Naive thymus-derived CD4-positive, alpha-beta T cell (primary cell): ENCODE measurements at regions of chr6 and their contacts with region 1.

Region 1: GRCh38 chr6:31665501-31666336 is at the start of gene CSNK2B:
- DNase-seq: peak; percentile 87 to 99 (median 98)
- ATAC-seq: peak; percentile 94
- H3K4me3 ChIP-seq: peak within 1 kb of the TSS; percentile 91
- H3K4me3 Mint-ChIP-seq: peak within 1 kb of the TSS; percentile 93 to 99 (median 96)
- H3K27ac ChIP-seq: peak within 1 kb of the TSS; percentile 97
- H3K27ac Mint-ChIP-seq: peak within 1 kb of the TSS; percentile 94 to 99 (median 98)
- H3K4me1 ChIP-seq: peaks cover 33 to 43% of the 10 kb centered on the region in 2 donors
- H3K4me1 Mint-ChIP-seq: peaks cover 25 to 75% (median 64%) of the 10 kb centered on the region in 7 donors
- H3K27me3 ChIP-seq: no peaks in the 10 kb centered on the region
- H3K27me3 Mint-ChIP-seq: peaks cover 0 to 2% (median 0%) of the 10 kb centered on the region in 5 donors
- total RNA-seq, gene CSNK2B: 101 to 215 (median 133) TPM

Region 2: GRCh38 chr6:31541658-31542521 is 123.8 kb before region 1 on chr6 and contains the start of gene DDX39B:
- CTCF ChIA-PET with region 1: no interaction called
- POLR2A ChIA-PET with region 1: interaction called, 7 read pairs
- intact Hi-C with region 1: loop called (anchors 1 kb)
- DNase-seq: peak; percentile 80 to 97 (median 94)
- ATAC-seq: peak; percentile 83
- H3K4me3 ChIP-seq: peak within 1 kb of the TSS; percentile 77
- H3K4me3 Mint-ChIP-seq: peak within 1 kb of the TSS; percentile 84 to 99 (median 98)
- H3K27ac ChIP-seq: peak within 1 kb of the TSS; percentile 97
- H3K27ac Mint-ChIP-seq: peak within 1 kb of the TSS; percentile 90 to 100 (median 100)
- H3K4me1 ChIP-seq: peaks cover 34 to 45% of the 10 kb centered on the region in 2 donors
- H3K4me1 Mint-ChIP-seq: peaks cover 34 to 65% (median 55%) of the 10 kb centered on the region in 7 donors
- H3K27me3 ChIP-seq: no peaks in the 10 kb centered on the region
- H3K27me3 Mint-ChIP-seq: no peaks in the 10 kb centered on the region
- total RNA-seq, gene DDX39B: 443 to 761 (median 546) TPM

Region 3: GRCh38 chr6:31680840-31681671 is 15.3 kb after region 1 on chr6 and contains the start of gene LY6G5C:
- CTCF ChIA-PET with region 1: no interaction called
- POLR2A ChIA-PET with region 1: interaction called, 3 read pairs
- intact Hi-C with region 1: loop called in 1 of 2 experiments (anchors 1 kb)
- DNase-seq: peak in 8 of 9 donors; percentile 28 to 65 (median 48)
- ATAC-seq: peak; percentile 80
- H3K4me3 ChIP-seq: peak within 1 kb of the TSS; percentile 78
- H3K4me3 Mint-ChIP-seq: peak within 1 kb of the TSS; percentile 86 to 98 (median 90)
- H3K27ac ChIP-seq: peak within 1 kb of the TSS; percentile 68
- H3K27ac Mint-ChIP-seq: peak within 1 kb of the TSS; percentile 60 to 86 (median 68)
- H3K4me1 ChIP-seq: peaks cover 15 to 16% of the 10 kb centered on the region in 2 donors
- H3K4me1 Mint-ChIP-seq: peaks cover 14 to 32% (median 19%) of the 10 kb centered on the region in 7 donors
- H3K27me3 ChIP-seq: no peaks in the 10 kb centered on the region
- H3K27me3 Mint-ChIP-seq: no peaks in the 10 kb centered on the region
- total RNA-seq, gene LY6G5C: 2.4 to 4.3 (median 3.1) TPM

Region 4: GRCh38 chr6:31822036-31822821 is 156.5 kb after region 1 on chr6:
- CTCF ChIA-PET with region 1: no interaction called
- POLR2A ChIA-PET with region 1: interaction called, 7 read pairs
- intact Hi-C with region 1: loop called (anchors 1 kb)
- DNase-seq: peak in 8 of 9 donors; percentile 46 to 72 (median 58)
- ATAC-seq: peak; percentile 57
- H3K4me3 ChIP-seq: peak overlapping the region; percentile 92
- H3K4me3 Mint-ChIP-seq: peak overlapping the region; percentile 92 to 98 (median 94)
- H3K27ac ChIP-seq: peak overlapping the region; percentile 81
- H3K27ac Mint-ChIP-seq: peak overlapping the region; percentile 87 to 98 (median 94)
- H3K4me1 ChIP-seq: peaks cover 24 to 27% of the 10 kb centered on the region in 2 donors
- H3K4me1 Mint-ChIP-seq: peaks cover 9 to 72% (median 62%) of the 10 kb centered on the region in 7 donors
- H3K27me3 ChIP-seq: no peaks in the 10 kb centered on the region
- H3K27me3 Mint-ChIP-seq: no peaks in the 10 kb centered on the region

Region 5: GRCh38 chr6:31862344-31863227 is 196.9 kb after region 1 on chr6 and contains the start of gene NEU1:
- CTCF ChIA-PET with region 1: no interaction called
- POLR2A ChIA-PET with region 1: interaction called, 7 read pairs
- intact Hi-C with region 1: loop called (anchors 1 kb)
- DNase-seq: peak; percentile 87 to 100 (median 99)
- ATAC-seq: peak; percentile 97
- H3K4me3 ChIP-seq: peak within 1 kb of the TSS; percentile 97
- H3K4me3 Mint-ChIP-seq: peak within 1 kb of the TSS; percentile 87 to 96 (median 93)
- H3K27ac ChIP-seq: peak within 1 kb of the TSS; percentile 86
- H3K27ac Mint-ChIP-seq: peak within 1 kb of the TSS; percentile 85 to 97 (median 93)
- H3K4me1 ChIP-seq: peaks cover 8 to 15% of the 10 kb centered on the region in 2 donors
- H3K4me1 Mint-ChIP-seq: peaks cover 14 to 29% (median 20%) of the 10 kb centered on the region in 7 donors
- H3K27me3 ChIP-seq: no peaks in the 10 kb centered on the region
- H3K27me3 Mint-ChIP-seq: peaks cover 0 to 2% (median 0%) of the 10 kb centered on the region in 5 donors
- total RNA-seq, gene NEU1: 18.6 to 35.0 (median 20.1) TPM

Region 6: DNA sequence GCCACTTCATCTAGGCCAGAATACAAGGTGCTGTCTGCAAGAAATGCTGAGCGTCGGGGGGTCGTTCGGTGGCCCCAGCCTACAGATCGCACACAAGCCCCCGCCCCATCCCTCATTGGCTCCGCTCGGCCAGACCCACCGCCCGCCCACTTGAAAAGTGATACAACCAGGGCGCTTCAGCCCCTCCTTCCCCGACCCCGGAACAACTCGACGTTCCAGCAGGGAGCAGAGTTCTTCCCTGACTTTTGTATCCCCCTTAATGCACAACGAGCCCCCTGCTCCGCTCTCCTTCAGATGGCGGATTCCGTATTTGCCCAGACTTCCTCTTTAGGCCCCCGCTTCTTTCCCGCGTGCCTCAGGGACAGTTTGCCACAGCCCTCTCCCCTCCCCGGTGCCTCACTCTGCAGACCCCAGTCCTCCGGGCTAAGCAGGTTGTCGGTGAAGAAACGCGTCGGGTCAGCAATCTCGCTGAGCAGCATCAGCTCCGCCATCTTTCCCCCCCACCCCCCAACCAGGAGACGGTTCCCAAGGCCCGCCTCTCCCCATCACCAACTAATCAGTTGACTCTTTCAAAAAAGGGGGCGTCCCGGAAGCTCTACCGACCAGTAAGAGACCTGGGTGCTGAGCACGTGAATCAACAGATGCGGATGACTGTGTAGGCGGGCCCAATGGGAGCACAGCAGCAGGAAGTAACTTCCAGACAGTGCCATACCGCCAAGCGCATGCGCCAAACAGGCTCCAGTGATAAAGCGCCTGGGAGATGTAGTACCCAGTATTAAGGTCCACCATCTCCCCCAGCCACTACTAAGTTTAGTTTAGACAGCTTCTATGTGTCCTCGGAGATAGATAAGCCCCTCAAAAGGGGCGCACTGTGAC is 462.2 kb after region 1 on chr6 and contains the start of gene ATF6B:
- CTCF ChIA-PET with region 1: no interaction called
- POLR2A ChIA-PET with region 1: no interaction called
- intact Hi-C with region 1: loop called (anchors 1 to 2 kb)
- DNase-seq: peak; percentile 80 to 100 (median 96)
- ATAC-seq: peak; percentile 97
- H3K4me3 ChIP-seq: peak within 1 kb of the TSS; percentile 96
- H3K4me3 Mint-ChIP-seq: peak within 1 kb of the TSS; percentile 96 to 100 (median 98)
- H3K27ac ChIP-seq: peak within 1 kb of the TSS; percentile 92
- H3K27ac Mint-ChIP-seq: peak within 1 kb of the TSS; percentile 83 to 98 (median 97)
- H3K4me1 ChIP-seq: peaks cover 33% of the 10 kb centered on the region in 2 donors
- H3K4me1 Mint-ChIP-seq: peaks cover 38 to 66% (median 53%) of the 10 kb centered on the region in 7 donors
- H3K27me3 ChIP-seq: no peaks in the 10 kb centered on the region
- H3K27me3 Mint-ChIP-seq: peaks cover 0 to 4% (median 0%) of the 10 kb centered on the region in 5 donors
- total RNA-seq, gene ATF6B: 115 to 168 (median 142) TPM